Activated T-helper 2 cell treated with anti-CD3 and anti-CD28 coated beads, Interferon-gamma antibody, Interleukin-2, Interleukin-4, amounts not matched to agents 10 μg/mL and 5 μg/mL and 100 μg/mL, durations not matched to agents 14 hours and 24 hours and 36 hours (primary cell): ENCODE measurements at regions of chr1 and their contacts with region 1.

Region 1: DNA sequence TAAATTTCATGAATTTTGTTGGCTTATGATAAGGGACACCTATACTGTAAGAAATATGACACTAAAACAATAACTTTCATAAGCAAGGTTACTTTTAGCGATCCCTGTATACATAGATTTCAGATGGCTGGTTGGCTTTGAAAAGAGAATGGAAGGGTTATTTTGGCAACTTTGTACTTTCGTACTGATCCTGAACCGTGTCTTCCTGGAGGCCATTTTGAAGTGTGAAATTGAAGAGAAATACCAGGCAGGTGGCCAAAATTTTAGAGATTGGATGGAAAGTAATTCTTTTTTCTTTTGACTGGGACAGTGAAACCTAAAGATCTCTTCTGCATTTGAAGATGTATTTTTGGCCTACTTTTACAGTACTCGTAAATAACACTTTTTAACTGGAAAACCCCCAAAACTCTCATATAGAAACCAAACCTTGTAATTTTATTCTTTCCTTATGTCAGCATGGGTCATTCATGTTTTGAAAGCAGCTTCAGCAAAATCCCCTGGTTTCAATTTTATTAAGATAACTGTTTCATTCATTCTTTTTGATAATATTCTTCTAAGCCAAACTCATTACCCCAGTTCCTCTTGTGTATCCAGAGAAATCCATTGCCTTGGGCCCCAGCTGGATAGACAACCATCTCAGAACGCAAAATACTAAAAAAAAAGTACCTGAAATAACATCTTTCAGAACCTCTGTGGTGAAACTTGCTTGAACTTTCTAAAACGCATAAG is 38.4 kb upstream of the ZNF281 start:
- DNase-seq: no peak
- H3K4me3 Mint-ChIP-seq: peak overlapping the region; percentile 6
- H3K27ac Mint-ChIP-seq: peak overlapping the region; percentile 92
- H3K4me1 Mint-ChIP-seq: peaks cover 38% of the 10 kb centered on the region
- H3K27me3 Mint-ChIP-seq: peaks cover 5% of the 10 kb centered on the region

Region 2: DNA sequence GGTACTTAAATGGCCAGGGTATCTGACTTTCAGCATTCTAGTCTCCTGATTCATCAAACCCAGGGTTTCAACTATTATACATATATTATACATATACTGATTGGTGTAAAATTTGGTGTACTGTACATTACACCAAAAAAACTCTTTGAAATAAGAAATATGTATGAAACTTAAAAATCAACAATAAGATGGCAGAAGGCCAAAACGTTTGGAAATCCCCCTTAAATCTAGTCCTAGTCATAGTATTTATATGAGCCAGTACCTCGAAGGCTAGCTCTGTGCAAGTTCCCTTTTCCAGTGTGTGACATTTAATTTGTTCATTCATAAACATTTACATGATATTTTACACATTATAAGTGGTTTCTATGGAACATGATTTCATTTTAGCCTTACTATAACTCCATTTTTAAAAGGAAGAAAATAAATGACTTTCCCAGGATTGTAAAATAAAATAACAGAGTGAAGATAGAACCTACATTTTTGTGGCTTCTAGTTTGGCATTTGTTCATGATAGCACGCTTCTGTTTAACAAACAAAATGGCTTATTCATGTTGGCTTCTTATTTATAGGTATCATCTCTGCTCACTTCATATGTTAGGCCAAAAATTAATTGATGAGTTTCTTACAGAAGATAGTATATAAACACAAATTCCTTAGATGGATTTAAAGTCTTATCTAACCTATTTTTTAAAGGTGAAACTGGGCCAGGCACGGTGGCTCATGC is 19.6 kb before region 1 on chr1:
- intact Hi-C with region 1: loop called (anchors 2 kb)
- DNase-seq: no peak
- H3K4me3 Mint-ChIP-seq: no peak overlapping the region
- H3K27ac Mint-ChIP-seq: no peak overlapping the region
- H3K4me1 Mint-ChIP-seq: peaks cover 16% of the 10 kb centered on the region
- H3K27me3 Mint-ChIP-seq: no peaks in the 10 kb centered on the region

Region 3: GRCh38 chr1:200464784-200465400 is 16.7 kb after region 1 on chr1:
- intact Hi-C with region 1: no loop called
- DNase-seq: no peak
- H3K4me3 Mint-ChIP-seq: no peak overlapping the region
- H3K27ac Mint-ChIP-seq: no peak overlapping the region
- H3K4me1 Mint-ChIP-seq: no peaks in the 10 kb centered on the region
- H3K27me3 Mint-ChIP-seq: peaks cover 41% of the 10 kb centered on the region